Activated CD4-positive, alpha-beta T cell treated with anti-CD3 and anti-CD28 coated beads, Interleukin-2, amount 10 ng/mL, durations not matched to agents 24 days and 14 days (primary cell): ENCODE measurements at regions of chr6 and their contacts with region 1.

Region 1: GRCh38 chr6:90274451-90275030 is 22.1 kb downstream of the BACH2 start:
- DNase-seq: peak; percentile 94
- H3K4me3 Mint-ChIP-seq: peak overlapping the region; percentile 76
- H3K27ac Mint-ChIP-seq: peak overlapping the region; percentile 96
- H3K4me1 Mint-ChIP-seq: peaks cover 79% of the 10 kb centered on the region
- H3K27me3 Mint-ChIP-seq: no peaks in the 10 kb centered on the region

Region 2: DNA sequence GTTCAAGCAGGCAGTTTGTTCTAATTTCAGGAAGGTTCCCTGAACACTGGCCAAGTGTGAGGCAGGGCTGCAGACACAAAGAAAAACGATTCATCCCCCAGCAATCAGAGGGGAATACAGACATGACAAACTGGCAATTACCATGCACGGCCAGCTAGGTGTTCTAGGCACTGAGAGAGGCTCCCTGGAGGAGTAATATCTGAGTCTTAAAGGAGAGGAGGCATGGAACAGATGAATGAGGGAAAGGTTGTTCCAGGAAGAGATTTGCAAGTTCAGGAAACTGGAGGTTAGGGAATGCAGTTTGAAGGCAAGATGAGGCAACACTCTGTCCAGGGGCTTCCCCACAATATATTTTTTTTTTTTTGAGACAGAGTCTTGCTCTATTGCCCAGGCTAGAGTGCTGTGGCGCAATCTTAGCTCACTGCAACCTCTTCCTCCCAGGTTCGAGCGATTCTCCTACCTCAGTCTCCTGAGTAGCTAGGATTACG is 873.6 kb before region 1 on chr6:
- intact Hi-C with region 1: no loop called
- DNase-seq: no peak
- H3K4me3 Mint-ChIP-seq: no peak overlapping the region
- H3K27ac Mint-ChIP-seq: no peak overlapping the region
- H3K4me1 Mint-ChIP-seq: peaks cover 2% of the 10 kb centered on the region
- H3K27me3 Mint-ChIP-seq: no peaks in the 10 kb centered on the region

Region 3: DNA sequence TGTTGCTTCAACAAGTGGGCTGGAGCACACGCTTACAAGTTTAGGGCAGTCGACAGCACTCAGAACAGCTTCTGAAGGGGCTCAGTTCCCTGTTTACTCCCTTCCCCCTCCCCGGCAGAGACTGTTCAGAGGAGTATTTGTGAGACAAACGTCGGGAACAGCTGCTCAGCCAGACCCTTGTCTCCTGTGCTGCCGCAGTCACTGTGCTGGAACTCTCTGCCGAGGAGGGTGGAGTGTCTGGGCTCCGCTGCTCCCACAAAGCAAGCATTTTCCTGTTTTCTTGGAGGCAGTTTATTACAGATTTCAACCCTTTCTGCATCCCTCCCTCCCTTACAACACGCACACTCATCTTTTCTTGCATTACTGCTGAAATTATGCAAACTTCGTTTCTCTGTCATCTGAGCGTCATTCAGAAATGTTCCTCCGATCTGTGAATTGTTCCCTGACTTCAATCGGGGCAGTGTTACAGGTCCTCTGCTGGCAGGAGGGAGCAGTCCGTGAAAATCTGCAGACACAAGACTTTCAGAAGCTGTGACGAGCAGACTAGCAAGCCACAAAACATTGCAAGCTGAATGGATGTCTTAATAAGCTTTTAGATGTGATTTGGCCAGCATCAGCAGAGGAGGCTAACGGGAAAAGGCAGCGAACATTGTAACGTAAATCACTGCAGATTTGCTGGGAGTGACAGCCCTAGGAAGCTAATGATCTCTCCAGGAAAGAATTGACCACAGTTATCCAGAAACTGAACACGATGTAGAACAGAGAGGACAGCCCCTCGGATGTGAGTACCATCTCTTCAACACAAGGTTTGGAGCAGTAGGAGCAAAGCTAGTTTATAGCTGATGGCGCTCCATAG is 712.2 kb before region 1 on chr6:
- intact Hi-C with region 1: no loop called
- DNase-seq: no peak
- H3K4me3 Mint-ChIP-seq: no peak overlapping the region
- H3K27ac Mint-ChIP-seq: no peak overlapping the region
- H3K4me1 Mint-ChIP-seq: no peaks in the 10 kb centered on the region
- H3K27me3 Mint-ChIP-seq: peaks cover 11% of the 10 kb centered on the region

Region 4: DNA sequence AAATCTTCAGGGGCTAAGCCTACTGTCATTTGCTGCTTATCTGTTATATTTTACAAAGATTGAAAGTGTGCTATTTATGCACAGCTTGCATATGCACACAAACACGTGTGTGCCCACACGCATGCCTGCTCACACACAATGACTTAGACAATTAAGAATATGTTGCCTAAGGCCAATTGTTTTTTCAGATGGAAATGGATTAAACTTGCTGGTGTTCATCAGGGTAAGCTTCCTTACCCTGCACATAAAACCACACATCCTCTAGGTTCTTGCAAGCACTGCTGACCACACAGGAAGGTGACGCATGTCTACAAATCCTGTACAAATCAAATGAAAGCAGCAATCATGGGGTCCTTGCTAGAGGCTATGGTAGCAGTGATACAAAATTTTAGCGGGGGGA is 321.9 kb before region 1 on chr6:
- intact Hi-C with region 1: loop called (anchors 2 kb)
- DNase-seq: peak; percentile 89
- H3K4me3 Mint-ChIP-seq: peak overlapping the region; percentile 69
- H3K27ac Mint-ChIP-seq: peak overlapping the region; percentile 84
- H3K4me1 Mint-ChIP-seq: peaks cover 63% of the 10 kb centered on the region
- H3K27me3 Mint-ChIP-seq: no peaks in the 10 kb centered on the region

Region 5: DNA sequence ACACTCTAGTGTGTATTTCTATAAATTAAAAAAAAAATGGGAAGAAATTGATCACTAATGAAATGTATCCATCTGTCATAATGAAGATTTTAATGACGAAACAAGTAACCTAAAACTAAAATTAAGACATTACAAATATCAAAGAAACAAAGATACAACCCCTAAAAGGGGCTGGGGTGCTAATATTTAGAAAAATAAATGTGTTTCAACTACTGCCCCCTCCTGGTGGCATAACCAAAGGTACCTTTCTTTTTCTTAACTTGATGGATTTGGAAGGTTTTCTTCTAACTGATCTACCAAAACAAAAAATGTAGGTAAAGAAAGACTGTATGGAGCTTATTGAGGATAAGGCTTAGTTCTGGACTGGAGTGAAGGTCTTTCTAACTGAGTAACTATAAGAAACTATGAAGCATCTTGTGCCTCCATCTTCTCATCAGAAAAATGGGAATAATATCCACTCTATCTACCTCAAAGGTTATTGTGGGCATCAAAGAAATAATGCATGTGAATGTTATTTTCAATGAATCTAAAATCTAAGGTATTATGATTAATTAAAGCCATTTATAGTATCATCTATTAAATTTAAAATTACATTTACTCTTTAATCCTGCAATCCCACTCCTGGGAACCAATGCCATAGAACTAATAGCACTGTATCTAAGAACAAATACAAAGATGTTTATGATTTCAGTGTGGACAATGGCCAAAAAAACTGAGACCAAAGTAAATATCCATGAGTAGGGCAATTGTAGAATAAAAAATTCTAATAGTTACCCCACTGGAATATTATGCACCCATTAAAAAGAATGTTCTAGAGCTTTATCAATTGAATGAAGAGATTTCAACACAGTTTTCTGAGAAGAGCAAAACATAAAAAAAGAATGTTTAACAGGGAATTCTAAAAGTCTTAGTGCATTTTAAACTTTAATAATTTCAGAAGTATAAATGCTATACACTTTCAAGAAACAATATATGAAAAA is 95.1 kb before region 1 on chr6:
- intact Hi-C with region 1: loop called (anchors 1 kb)
- DNase-seq: peak; percentile 75
- H3K4me3 Mint-ChIP-seq: peak overlapping the region; percentile 11
- H3K27ac Mint-ChIP-seq: no peak overlapping the region
- H3K4me1 Mint-ChIP-seq: peaks cover 68% of the 10 kb centered on the region
- H3K27me3 Mint-ChIP-seq: no peaks in the 10 kb centered on the region

Region 6: GRCh38 chr6:90230548-90231215 is 43.9 kb before region 1 on chr6:
- intact Hi-C with region 1: loop called (anchors 1 kb)
- DNase-seq: no peak
- H3K4me3 Mint-ChIP-seq: peak overlapping the region; percentile 56
- H3K27ac Mint-ChIP-seq: peak overlapping the region; percentile 30
- H3K4me1 Mint-ChIP-seq: peaks cover 78% of the 10 kb centered on the region
- H3K27me3 Mint-ChIP-seq: no peaks in the 10 kb centered on the region

Region 7: DNA sequence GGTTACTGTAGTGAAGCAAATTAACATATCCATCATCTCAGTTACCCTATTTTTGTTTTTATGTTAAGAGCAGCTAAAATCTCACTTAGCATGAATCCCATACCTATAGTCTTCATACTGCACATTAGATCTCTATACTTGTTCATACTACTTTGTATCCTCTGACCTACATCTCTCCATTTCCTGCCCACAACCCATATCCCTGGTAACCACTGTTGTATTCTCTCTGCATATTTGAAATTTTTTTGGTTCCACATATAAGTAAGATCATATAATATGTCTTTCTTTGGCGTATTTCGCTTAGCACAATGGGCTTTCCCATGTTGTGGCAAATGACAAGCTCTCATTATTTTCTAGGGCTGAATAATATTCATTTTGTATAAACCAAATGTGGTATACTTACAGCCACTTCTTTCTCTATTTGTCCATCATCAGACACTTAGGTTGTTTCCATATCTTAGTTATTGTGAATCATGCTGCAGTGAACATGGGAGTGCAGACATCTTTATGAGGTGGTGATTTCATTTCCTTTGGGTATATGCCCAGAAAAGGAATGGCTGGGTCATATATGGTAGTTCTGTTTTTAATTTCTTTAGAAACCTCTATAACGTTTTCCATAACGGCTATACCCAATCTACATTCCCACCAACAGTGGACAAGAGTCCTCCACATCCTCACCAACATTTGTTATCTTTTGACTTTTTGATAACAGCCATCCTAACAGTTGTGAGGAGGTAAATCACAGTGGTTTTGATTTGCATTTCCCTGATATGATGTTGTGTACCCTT is 17.6 kb before region 1 on chr6:
- intact Hi-C with region 1: loop called (anchors 1 kb)
- DNase-seq: peak; percentile 81
- H3K4me3 Mint-ChIP-seq: peak overlapping the region; percentile 6
- H3K27ac Mint-ChIP-seq: peak overlapping the region; percentile 89
- H3K4me1 Mint-ChIP-seq: peaks cover 66% of the 10 kb centered on the region
- H3K27me3 Mint-ChIP-seq: no peaks in the 10 kb centered on the region